ENCODE measurements at regions of chr12 and their contacts with region 1.

Region 1: DNA sequence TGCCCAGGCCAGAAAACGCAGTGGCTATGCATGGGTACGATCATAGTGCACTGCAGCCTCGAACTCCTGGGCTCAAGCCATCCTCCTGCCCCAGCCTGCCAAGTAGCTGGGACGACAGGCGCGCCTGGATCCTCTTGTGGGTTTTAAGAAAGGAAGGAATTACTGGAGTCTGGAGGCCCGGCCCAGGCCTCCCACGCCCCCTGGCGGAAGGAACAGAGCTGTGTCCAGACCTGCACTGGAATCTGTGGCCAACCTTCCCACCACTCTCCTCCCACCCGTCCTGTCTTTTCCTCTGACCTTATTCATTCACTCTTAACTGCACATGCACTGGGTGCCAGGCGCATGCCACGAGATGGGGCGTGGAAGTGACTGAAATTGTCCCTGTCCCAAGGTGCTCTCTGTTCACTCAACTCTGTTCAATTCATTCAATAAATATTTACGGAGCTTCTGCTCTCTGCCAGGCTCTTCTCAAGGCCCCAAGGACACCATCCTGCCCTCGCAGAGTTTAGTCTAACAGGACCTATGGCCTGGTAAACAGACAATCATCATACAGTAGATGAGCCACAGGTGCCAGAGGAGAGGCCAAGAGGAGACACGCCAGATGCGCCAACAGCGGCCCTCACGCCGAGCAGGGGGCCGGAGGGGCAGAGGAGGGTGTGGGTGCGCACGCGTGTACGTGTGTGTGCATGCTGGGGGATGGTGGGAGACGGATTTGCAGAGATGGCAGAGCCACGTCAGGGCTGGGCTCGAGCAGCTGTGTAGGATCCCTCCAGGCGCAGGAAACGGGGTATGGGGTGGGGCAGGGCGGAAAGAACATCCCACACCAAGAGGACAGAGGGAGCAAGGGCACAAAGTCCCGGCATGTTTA is 13.7 kb upstream of the TMEM106C start:
- DNase-seq: peak; percentile 81
- CTCF ChIP-seq: peak; percentile 86

Region 2: DNA sequence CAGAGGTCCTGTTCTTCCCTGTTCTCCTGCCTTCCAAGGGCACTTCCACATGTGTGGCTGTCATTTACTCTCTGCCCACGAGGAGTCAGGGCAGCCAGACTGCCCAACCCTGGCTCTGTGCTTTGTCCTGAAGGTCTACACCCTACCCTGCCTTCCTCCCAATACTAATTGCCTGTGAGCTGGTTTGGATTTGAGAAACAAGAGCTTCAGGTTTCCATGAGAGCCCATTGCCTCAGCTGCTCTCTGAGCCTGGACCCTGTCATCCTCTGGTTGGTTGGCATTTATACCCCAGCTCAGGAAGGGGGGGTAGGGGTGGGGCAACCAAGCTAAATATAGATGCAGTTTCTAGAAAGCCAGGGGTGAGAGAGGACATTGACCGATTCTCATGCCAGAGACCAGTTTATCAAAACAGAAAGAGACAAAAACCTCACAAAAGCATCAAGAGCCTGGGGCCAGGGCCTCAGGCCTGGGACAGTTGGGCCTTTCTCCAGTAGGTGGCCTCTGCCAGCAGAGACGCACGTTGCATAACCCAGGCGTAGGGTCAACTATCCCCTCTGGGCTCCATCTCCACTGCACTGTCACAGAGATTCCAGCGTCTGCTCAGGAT is 79.4 kb before region 1 on chr12:
- CTCF ChIA-PET with region 1: interaction called, 10 read pairs
- POLR2A ChIA-PET with region 1: no interaction called
- DNase-seq: no peak
- CTCF ChIP-seq: peak; percentile 46

Region 3: DNA sequence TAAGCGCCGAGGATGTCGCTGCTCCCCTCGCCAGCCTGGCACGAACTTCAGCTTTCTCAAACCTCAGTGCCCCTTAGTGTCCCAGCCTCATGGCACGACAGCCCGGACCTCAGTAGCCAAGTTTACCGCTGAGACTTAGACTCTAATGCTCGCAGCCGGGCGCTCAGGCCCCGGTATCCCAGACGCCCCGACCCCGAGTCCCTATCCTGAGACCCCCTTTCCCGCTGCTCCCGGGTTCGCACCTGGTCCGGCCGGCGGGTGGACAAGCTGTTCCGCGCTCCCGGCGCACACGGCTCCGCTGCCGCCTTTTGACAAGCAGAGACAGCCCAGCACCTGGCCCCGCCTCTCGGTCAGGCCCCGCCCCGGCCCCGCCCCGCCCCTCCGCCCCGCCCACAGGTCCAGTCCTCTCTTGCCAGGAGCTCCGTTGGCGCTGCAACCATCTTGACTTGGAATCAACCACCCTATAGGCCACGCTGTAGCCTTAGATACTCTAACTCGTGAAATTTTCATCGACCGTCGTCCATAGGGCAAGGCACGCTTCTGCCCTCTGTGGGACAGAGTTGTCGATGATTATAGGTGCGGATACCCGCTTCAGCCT is 44.9 kb before region 1 on chr12 and contains the start of gene VDR:
- CTCF ChIA-PET with region 1: interaction called, 14 read pairs
- POLR2A ChIA-PET with region 1: no interaction called
- DNase-seq: peak; percentile 92
- CTCF ChIP-seq: no peak

Region 4: DNA sequence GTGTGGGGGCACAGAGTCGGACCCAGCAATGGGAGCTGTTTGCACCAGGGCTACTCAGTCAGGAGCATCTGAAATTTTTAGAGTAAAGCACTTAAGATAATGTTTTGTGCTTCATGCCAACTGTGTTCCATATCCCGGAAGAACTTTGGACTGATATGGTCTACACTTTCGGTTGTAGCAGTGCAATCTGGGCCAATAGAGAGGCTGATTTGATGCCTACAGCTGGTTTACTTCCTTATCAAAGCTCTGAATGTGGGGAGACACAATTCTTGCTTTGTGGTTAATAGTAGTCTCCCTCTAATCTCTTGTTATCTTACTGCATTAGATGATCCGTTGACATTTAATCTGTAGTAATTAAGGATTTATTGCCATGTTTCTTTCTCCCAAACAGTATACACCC is 37.1 kb before region 1 on chr12:
- CTCF ChIA-PET with region 1: interaction called, 11 read pairs
- POLR2A ChIA-PET with region 1: no interaction called
- DNase-seq: no peak
- CTCF ChIP-seq: no peak

Region 5: DNA sequence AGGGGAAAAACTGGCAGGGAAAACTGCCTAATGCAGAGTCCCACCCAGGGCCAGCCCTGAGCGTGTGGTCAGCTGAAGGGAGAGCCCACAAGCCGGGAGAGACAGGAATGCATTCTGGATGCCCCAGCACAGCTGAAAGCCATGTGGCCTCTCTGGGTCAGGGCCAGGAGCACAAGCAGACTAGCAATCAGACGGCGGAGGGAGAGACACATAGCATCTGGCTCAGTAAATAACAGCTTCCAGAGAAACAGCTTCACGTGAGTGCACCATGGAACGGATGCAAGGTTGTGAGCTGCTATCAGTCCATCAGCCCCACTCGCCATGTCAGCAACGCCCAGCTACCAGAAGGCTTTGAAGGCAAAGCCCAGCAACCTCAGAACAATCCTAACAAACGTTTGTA is 14.5 kb before region 1 on chr12:
- CTCF ChIA-PET with region 1: interaction called, 20 read pairs
- POLR2A ChIA-PET with region 1: no interaction called
- DNase-seq: no peak
- CTCF ChIP-seq: no peak

Region 6: GRCh38 chr12:47963340-47964040 is 13.8 kb after region 1 on chr12 and contains the start of gene TMEM106C:
- CTCF ChIA-PET with region 1: interaction called, 33 read pairs
- POLR2A ChIA-PET with region 1: no interaction called
- DNase-seq: peak; percentile 100
- CTCF ChIP-seq: peak; percentile 98